MCF 10A (cell line): ENCODE measurements at regions of chr4 and their contacts with region 1.

Region 1: DNA sequence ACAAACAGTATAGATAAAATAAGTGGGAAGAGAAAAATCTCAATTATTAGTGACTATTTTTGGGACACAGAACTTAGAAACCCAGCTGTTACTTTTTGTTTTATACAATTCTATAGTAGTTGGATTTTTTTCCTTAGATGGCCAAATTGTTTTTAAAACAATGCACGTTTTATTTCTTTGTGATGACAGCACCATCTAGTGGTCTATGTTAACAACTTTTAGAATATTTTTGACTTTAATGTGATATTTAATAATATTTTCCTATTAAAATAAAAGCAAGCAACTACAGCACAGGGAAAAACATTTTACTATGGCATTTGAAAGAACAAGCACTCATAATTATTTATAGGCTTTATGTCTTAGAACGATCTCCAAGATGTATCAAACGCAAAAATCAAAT is 5.6 kb upstream of the SMIM31 start:
- DNase-seq: peak; percentile 39
- H3K4me3 Mint-ChIP-seq: no peak overlapping the region
- H3K27ac Mint-ChIP-seq: no peak overlapping the region
- H3K4me1 Mint-ChIP-seq: peaks cover 6% of the 10 kb centered on the region
- H3K27me3 Mint-ChIP-seq: no peaks in the 10 kb centered on the region
- CTCF ChIP-seq: peak; percentile 41

Region 2: DNA sequence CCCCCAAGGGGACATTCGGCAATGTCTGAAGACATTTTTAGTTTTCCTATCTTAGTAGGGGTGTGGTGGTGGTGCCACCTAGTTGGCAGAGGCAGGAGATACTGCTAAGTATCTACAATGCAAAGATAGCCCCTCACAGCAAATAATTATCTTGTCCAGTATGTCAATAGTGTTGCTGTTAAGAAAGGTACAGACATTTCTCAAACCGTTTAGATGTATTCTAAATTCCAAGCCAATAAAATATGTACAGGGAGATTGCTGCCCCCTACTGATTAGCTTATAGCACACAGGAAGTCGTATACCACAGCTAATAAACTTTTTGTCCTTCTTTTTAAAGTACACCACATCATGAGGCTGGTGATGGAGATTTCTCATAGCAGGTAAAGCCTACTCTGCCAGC is 993.4 kb before region 1 on chr4:
- CTCF ChIA-PET with region 1: no interaction called
- POLR2A ChIA-PET with region 1: no interaction called
- intact Hi-C with region 1: loop called (anchors 5 kb)
- DNase-seq: peak; percentile 49
- H3K4me3 Mint-ChIP-seq: no peak overlapping the region
- H3K27ac Mint-ChIP-seq: no peak overlapping the region
- H3K4me1 Mint-ChIP-seq: no peaks in the 10 kb centered on the region
- H3K27me3 Mint-ChIP-seq: no peaks in the 10 kb centered on the region
- CTCF ChIP-seq: peak; percentile 38

Region 3: DNA sequence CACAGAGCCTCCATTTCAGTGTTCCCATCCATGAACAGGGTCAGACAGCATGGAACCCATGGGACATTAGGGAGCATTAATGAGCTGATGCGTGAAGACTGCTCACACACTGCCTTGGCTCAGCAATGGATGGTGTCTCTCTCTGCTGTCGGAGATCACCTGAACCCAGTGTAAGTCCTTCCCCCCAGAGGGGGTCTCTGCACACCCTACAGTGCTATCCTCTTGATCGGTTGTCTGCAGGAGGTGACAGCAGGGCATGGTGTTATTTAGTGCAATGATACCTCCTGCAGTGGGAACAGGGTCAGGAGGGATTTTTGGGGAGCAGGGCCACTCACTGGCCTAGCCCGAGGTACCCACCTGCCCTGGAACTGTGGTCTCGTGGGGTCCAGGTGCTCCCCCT is 154.2 kb after region 1 on chr4:
- CTCF ChIA-PET with region 1: no interaction called
- POLR2A ChIA-PET with region 1: no interaction called
- intact Hi-C with region 1: no loop called
- DNase-seq: no peak
- H3K4me3 Mint-ChIP-seq: no peak overlapping the region
- H3K27ac Mint-ChIP-seq: no peak overlapping the region
- H3K4me1 Mint-ChIP-seq: no peaks in the 10 kb centered on the region
- H3K27me3 Mint-ChIP-seq: no peaks in the 10 kb centered on the region
- CTCF ChIP-seq: no peak

Region 4: GRCh38 chr4:165953181-165953580 is 1204.8 kb after region 1 on chr4:
- CTCF ChIA-PET with region 1: no interaction called
- POLR2A ChIA-PET with region 1: no interaction called
- intact Hi-C with region 1: no loop called
- DNase-seq: no peak
- H3K4me3 Mint-ChIP-seq: no peak overlapping the region
- H3K27ac Mint-ChIP-seq: no peak overlapping the region
- H3K4me1 Mint-ChIP-seq: no peaks in the 10 kb centered on the region
- H3K27me3 Mint-ChIP-seq: no peaks in the 10 kb centered on the region
- CTCF ChIP-seq: no peak